IMR-90 (cell line): ENCODE measurements at regions of chr6 and their contacts with region 1.

Region 1: GRCh38 chr6:99559057-99559456 is 9.4 kb downstream of the CCNC start:
- DNase-seq: no peak
- ATAC-seq: no peak
- H3K4me3 ChIP-seq: no peak overlapping the region
- H3K27ac ChIP-seq: no peak overlapping the region
- H3K4me1 ChIP-seq: no peaks in the 10 kb centered on the region
- H3K27me3 ChIP-seq: no peaks in the 10 kb centered on the region
- CTCF ChIP-seq: no peak
- POLR2A ChIP-seq: no peak
- RAD21 ChIP-seq: no peak

Region 2: DNA sequence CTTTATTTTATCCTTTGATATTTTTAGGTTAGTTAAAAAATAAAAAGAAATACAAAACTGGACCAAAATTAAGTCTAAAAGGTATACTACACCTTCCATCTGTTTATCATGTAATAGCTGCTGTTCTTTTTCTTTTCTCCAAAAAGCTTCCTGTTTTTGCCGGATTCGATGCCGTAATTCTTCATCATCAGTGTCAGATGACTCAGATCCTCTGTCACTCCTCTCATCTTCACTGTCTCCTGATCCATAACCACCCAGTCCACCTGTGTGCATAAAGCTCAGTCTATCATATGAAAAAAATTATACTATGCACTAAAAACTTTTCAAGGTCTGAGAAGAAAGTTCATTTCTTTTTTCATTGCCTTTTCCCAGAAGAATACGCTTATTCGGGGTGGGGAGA is 156.6 kb before region 1 on chr6:
- CTCF ChIA-PET with region 1: no interaction called
- POLR2A ChIA-PET with region 1: no interaction called
- dilution Hi-C with region 1: no loop called
- in situ Hi-C with region 1: no loop called
- intact Hi-C with region 1: loop called (anchors 10 kb)
- DNase-seq: no peak
- ATAC-seq: no peak
- H3K4me3 ChIP-seq: no peak overlapping the region
- H3K27ac ChIP-seq: no peak overlapping the region
- H3K4me1 ChIP-seq: no peaks in the 10 kb centered on the region
- H3K27me3 ChIP-seq: no peaks in the 10 kb centered on the region
- CTCF ChIP-seq: no peak
- POLR2A ChIP-seq: no peak
- RAD21 ChIP-seq: no peak

Region 3: DNA sequence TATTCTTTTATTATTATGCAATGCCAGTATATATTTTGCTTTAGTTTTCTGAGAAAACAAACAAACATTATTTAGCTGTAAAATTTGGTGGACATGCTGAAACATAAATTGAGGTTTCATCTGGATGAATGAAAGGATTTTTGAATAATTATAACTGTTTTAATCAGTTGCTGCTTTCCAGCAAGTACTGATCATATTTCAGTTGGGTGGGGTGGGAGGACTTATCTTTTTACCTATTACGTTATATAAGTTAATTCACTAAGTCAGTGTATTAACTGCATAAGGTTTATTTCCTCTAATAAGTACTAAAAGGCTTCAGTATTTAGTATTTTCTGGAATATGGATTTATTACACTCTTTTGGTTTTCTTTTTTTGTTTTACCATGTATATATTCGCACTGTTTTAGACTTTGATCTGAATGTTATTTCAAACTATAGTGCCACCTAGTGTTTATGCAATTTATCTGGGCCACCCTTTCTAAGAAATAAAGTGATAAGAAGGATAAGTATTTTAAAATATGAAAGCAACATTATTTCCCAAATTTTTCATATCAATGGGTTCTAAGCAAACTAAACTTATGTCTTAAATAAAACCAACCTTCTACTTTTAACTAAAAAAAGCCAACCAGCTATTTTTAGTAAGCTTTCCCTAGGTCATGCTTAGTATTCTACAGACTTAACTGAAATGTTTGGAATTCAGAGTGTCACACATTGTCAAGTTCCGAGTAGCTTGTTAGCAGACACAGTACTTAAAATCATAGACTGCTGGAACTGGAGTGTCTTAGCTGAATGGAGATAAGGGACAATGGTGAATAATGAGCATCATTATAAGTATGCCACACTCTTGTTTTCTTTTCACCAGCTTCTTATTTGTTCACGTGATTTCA is 540.4 kb after region 1 on chr6:
- CTCF ChIA-PET with region 1: no interaction called
- POLR2A ChIA-PET with region 1: no interaction called
- dilution Hi-C with region 1: no loop called
- in situ Hi-C with region 1: no loop called
- intact Hi-C with region 1: no loop called
- DNase-seq: peak; percentile 41
- ATAC-seq: 0 out of 2 replicates have a peak, but pooled peaks have one; percentile 43
- H3K4me3 ChIP-seq: no peak overlapping the region
- H3K27ac ChIP-seq: no peak overlapping the region
- H3K4me1 ChIP-seq: peaks cover 9% of the 10 kb centered on the region
- H3K27me3 ChIP-seq: peaks cover 3% of the 10 kb centered on the region
- CTCF ChIP-seq: peak; percentile 70
- POLR2A ChIP-seq: no peak
- RAD21 ChIP-seq: peak; percentile 53